ENCODE measurements at regions of chr1 and their contacts with region 1.

Region 1: DNA sequence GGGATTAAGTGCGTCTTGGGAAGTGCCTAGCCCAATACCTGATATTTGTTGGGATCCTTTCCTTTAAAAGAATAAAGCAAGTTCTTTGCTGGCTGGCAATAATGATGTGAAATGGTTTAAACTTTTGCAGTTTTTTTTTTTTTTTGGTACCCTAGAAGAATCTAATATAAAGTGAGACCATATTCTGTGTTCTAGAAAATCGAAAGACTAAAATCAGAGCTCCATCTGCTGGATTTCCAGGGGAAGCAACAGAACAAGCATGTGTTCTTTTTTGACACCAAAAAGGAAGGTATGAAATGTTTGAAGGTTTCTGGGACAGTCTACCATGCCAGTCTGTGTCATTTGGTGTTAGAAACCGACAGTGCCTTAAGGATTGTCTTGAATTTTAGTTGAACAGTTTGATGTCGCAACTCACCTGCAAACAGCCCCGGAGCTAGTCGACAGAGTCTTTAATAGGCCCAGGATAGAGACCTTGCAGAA is 6.4 kb downstream of the UTP11 start:
- DNase-seq: peak in 3 of 14 experiments; percentile 46 to 60 (median 58)
- ATAC-seq: peak; percentile 76
- H3K4me3 ChIP-seq: no peak overlapping the region
- H3K4me3 Mint-ChIP-seq: no peak overlapping the region
- H3K27ac ChIP-seq: no peak overlapping the region
- H3K27ac Mint-ChIP-seq: no peak overlapping the region
- H3K4me1 ChIP-seq: peaks cover 10% of the 10 kb centered on the region
- H3K4me1 Mint-ChIP-seq: peaks cover 17% of the 10 kb centered on the region
- H3K27me3 ChIP-seq: no peaks in the 10 kb centered on the region
- H3K27me3 Mint-ChIP-seq: no peaks in the 10 kb centered on the region
- CTCF ChIP-seq: peak; percentile 59

Region 2: GRCh38 chr1:37890378-37891014 is 128.4 kb before region 1 on chr1:
- CTCF ChIA-PET with region 1: no interaction called
- POLR2A ChIA-PET with region 1: no interaction called
- intact Hi-C with region 1: loop called in 1 of 2 experiments (anchors 2 kb)
- DNase-seq: peak in 4 of 14 experiments; percentile 8 to 62 (median 58)
- ATAC-seq: peak; percentile 61
- H3K4me3 ChIP-seq: no peak overlapping the region
- H3K4me3 Mint-ChIP-seq: no peak overlapping the region
- H3K27ac ChIP-seq: no peak overlapping the region
- H3K27ac Mint-ChIP-seq: peak overlapping the region; percentile 66
- H3K4me1 ChIP-seq: no peaks in the 10 kb centered on the region
- H3K4me1 Mint-ChIP-seq: peaks cover 5% of the 10 kb centered on the region
- H3K27me3 ChIP-seq: no peaks in the 10 kb centered on the region
- H3K27me3 Mint-ChIP-seq: no peaks in the 10 kb centered on the region
- CTCF ChIP-seq: peak; percentile 68

Region 3: GRCh38 chr1:37919277-37919676 is 99.6 kb before region 1 on chr1:
- CTCF ChIA-PET with region 1: no interaction called
- POLR2A ChIA-PET with region 1: no interaction called
- intact Hi-C with region 1: no loop called
- DNase-seq: peak in 2 of 14 experiments; percentile 20 to 26
- ATAC-seq: no peak
- H3K4me3 ChIP-seq: no peak overlapping the region
- H3K4me3 Mint-ChIP-seq: no peak overlapping the region
- H3K27ac ChIP-seq: no peak overlapping the region
- H3K27ac Mint-ChIP-seq: no peak overlapping the region
- H3K4me1 ChIP-seq: peaks cover 12% of the 10 kb centered on the region
- H3K4me1 Mint-ChIP-seq: peaks cover 19% of the 10 kb centered on the region
- H3K27me3 ChIP-seq: no peaks in the 10 kb centered on the region
- H3K27me3 Mint-ChIP-seq: no peaks in the 10 kb centered on the region
- CTCF ChIP-seq: no peak

Measured in CD4-positive, alpha-beta T cell (primary cell).